HEK293T (cell line): ENCODE measurements at regions of chr11 and their contacts with region 1.

Region 1: GRCh38 chr11:34174412-34175041 is 69.1 kb downstream of the NAT10 start:
- DNase-seq: peak; percentile 89

Region 2: GRCh38 chr11:34134765-34135164 is 39.8 kb before region 1 on chr11:
- CTCF ChIA-PET with region 1: no interaction called
- POLR2A ChIA-PET with region 1: no interaction called
- DNase-seq: no peak

Region 3: GRCh38 chr11:34357701-34358257 is 183.3 kb after region 1 on chr11 and contains the start of gene ABTB2:
- CTCF ChIA-PET with region 1: interaction called, 26 read pairs
- POLR2A ChIA-PET with region 1: interaction called, 14 read pairs
- DNase-seq: peak; percentile 95

Region 4: GRCh38 chr11:34890812-34891211 is 716.3 kb after region 1 on chr11:
- CTCF ChIA-PET with region 1: no interaction called
- POLR2A ChIA-PET with region 1: no interaction called
- DNase-seq: no peak